ENCODE measurements at regions of chr3 and their contacts with region 1.

Region 1: DNA sequence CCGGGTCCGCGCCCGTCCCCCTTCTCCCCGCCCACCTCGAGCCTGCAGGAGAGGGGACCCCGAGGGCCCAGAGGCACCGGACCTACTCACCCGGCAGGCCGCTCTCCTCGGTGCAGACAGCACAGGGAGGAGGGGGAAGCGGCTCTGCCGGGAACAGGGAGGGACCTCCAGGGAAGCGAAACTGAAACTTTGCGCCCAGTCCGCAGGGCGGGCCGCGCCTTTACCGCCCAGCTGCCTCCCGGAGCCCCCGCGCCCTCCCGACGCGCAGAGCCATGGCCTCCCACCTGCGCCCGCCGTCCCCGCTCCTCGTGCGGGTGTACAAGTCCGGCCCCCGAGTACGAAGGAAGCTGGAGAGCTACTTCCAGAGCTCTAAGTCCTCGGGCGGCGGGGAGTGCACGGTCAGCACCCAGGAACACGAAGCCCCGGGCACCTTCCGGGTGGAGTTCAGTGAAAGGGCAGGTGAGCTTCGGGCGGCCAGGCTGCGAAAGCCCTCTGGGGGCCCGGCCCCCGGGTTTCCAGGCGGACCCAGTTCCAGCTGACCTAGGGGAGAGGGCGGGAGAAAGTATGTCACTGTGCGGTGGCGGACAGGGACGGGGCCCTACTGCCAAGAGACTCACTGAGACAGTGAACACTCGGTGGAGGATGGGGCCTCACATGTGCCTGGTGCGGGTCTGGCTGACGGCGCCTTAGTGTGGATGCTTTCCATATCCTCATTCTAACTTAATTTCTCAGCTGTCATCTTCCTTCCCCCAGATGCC is at the starts of genes DTX3L and PARP9:
- DNase-seq: peak; percentile 83 to 84
- H3K4me3 ChIP-seq: peak within 1 kb of the TSS; percentile 72 to 77
- H3K27ac ChIP-seq: peak within 1 kb of the TSS; percentile 96
- H3K4me1 ChIP-seq: peaks cover 0 to 7% of the 10 kb centered on the region in 2 donors
- H3K27me3 ChIP-seq: no peaks in the 10 kb centered on the region
- CTCF ChIP-seq: no peak
- POLR2A ChIP-seq: peak; percentile 57 to 76
- total RNA-seq, gene DTX3L: 12.9 to 38.9 (median 23.3) TPM
- total RNA-seq, gene PARP9: 16.8 to 80.7 (median 35.8) TPM

Region 2: DNA sequence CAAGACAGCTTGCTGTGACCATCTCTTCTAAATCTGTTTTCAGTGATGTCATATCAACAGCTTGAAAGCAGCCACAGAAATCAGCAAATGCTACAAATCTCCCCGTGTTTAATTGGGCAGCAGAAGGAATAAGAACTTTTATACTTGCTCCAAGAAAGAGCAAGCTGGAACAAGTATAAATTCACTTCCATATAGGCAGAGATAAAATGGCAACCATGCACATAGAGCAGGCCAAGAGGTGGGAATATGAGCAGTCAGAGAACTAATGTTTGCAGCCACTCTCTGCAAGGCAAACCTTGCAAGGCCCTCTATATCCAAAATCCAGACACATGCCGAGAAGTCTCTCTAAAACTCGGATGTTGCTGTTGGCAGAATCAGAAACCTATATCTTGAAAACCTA is 16.3 kb before region 1 on chr3:
- intact Hi-C with region 1: no loop called
- DNase-seq: no peak
- H3K4me3 ChIP-seq: no peak overlapping the region
- H3K27ac ChIP-seq: no peak overlapping the region
- H3K4me1 ChIP-seq: no peaks in the 10 kb centered on the region
- H3K27me3 ChIP-seq: no peaks in the 10 kb centered on the region
- CTCF ChIP-seq: no peak
- POLR2A ChIP-seq: no peak

Region 3: GRCh38 chr3:122679085-122679881 is 114.9 kb after region 1 on chr3:
- intact Hi-C with region 1: loop called (anchors 2 kb)
- DNase-seq: peak; percentile 85 to 89
- H3K4me3 ChIP-seq: peak overlapping the region; percentile 77 to 87
- H3K27ac ChIP-seq: peak overlapping the region; percentile 97 to 98
- H3K4me1 ChIP-seq: peaks cover 3 to 7% of the 10 kb centered on the region in 2 donors
- H3K27me3 ChIP-seq: no peaks in the 10 kb centered on the region
- CTCF ChIP-seq: peak; percentile 83 to 89 (median 85)
- POLR2A ChIP-seq: peak in 1 of 2 donors; percentile 11

Region 4: GRCh38 chr3:122697952-122698620 is 133.8 kb after region 1 on chr3:
- intact Hi-C with region 1: no loop called
- DNase-seq: no peak
- H3K4me3 ChIP-seq: no peak overlapping the region
- H3K27ac ChIP-seq: no peak overlapping the region
- H3K4me1 ChIP-seq: no peaks in the 10 kb centered on the region
- H3K27me3 ChIP-seq: no peaks in the 10 kb centered on the region
- CTCF ChIP-seq: no peak
- POLR2A ChIP-seq: no peak

Region 5: GRCh38 chr3:122921791-122922651 is 357.7 kb after region 1 on chr3:
- intact Hi-C with region 1: no loop called
- DNase-seq: no peak
- H3K4me3 ChIP-seq: no peak overlapping the region
- H3K27ac ChIP-seq: no peak overlapping the region
- H3K4me1 ChIP-seq: no peaks in the 10 kb centered on the region
- H3K27me3 ChIP-seq: no peaks in the 10 kb centered on the region
- CTCF ChIP-seq: no peak
- POLR2A ChIP-seq: no peak